K562 (cell line): ENCODE measurements at regions of chr6 and their contacts with region 1.

Region 1: DNA sequence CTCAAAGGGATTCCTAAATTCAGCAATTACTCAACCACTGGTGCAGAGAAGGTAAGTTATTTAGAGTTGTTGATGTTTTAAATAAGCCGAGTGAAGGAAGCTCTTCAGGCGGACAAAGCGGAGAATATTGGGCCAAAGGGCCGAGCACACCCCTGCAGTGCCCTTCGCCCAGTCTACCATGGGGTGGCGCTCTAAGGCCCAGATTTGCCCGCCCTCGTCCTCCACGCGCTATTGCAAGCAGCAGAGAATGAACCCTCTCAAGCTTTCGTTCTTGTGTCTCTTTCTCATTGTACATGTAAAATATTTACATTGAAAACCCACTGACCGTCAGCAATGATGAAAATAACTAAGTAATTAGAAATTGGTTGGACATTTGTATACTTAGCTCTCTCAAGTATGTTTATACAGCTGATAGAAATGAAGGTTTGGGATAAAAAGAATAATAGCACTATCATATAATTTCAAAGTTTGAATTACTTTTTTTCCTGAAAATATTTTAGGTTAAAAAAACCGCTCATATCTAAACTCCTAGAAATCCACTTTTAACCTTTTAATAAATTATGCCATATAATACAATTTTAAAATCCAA is 195.0 kb upstream of the CEP162 start:
- DNase-seq: peak; percentile 55 to 75 (median 62)
- ATAC-seq: peak; percentile 100
- H3K4me3 ChIP-seq: no peak overlapping the region
- H3K27ac ChIP-seq: no peak overlapping the region
- H3K4me1 ChIP-seq: no peaks in the 10 kb centered on the region
- H3K27me3 ChIP-seq: no peaks in the 10 kb centered on the region
- CTCF ChIP-seq: peak; percentile 89 to 96 (median 91)
- EP300 ChIP-seq: no peak
- POLR2A ChIP-seq: no peak
- RAD21 ChIP-seq: peak; percentile 94 to 95

Region 2: GRCh38 chr6:84284428-84285049 is 137.9 kb before region 1 on chr6:
- CTCF ChIA-PET with region 1: no interaction called
- POLR2A ChIA-PET with region 1: no interaction called
- in situ Hi-C with region 1: no loop called
- intact Hi-C with region 1: loop called (anchors 1 kb)
- DNase-seq: peak; percentile 18 to 50 (median 36)
- ATAC-seq: peak; percentile 91
- H3K4me3 ChIP-seq: no peak overlapping the region
- H3K27ac ChIP-seq: no peak overlapping the region
- H3K4me1 ChIP-seq: peaks cover 0 to 12% of the 10 kb centered on the region in 2 experiments; a peak in 2 of 5 replicates
- H3K27me3 ChIP-seq: no peaks in the 10 kb centered on the region
- CTCF ChIP-seq: peak; percentile 53 to 69 (median 68)
- EP300 ChIP-seq: no peak
- POLR2A ChIP-seq: no peak
- RAD21 ChIP-seq: peak; percentile 39 to 61

Region 3: GRCh38 chr6:84685983-84686584 is 263.6 kb after region 1 on chr6:
- CTCF ChIA-PET with region 1: no interaction called
- POLR2A ChIA-PET with region 1: no interaction called
- in situ Hi-C with region 1: no loop called
- intact Hi-C with region 1: loop called (anchors 2 kb)
- DNase-seq: peak; percentile 18 to 51 (median 21)
- ATAC-seq: peak; percentile 77
- H3K4me3 ChIP-seq: no peak overlapping the region
- H3K27ac ChIP-seq: no peak overlapping the region
- H3K4me1 ChIP-seq: no peaks in the 10 kb centered on the region
- H3K27me3 ChIP-seq: no peaks in the 10 kb centered on the region
- CTCF ChIP-seq: peak in 2 of 3 experiments; percentile 63 to 64; a peak in 5 of 6 replicates
- EP300 ChIP-seq: no peak
- POLR2A ChIP-seq: no peak
- RAD21 ChIP-seq: peak; percentile 44 to 71

Region 4: GRCh38 chr6:85015396-85015990 is 593.0 kb after region 1 on chr6:
- CTCF ChIA-PET with region 1: no interaction called
- POLR2A ChIA-PET with region 1: no interaction called
- in situ Hi-C with region 1: no loop called
- intact Hi-C with region 1: loop called (anchors 2 kb)
- DNase-seq: peak; percentile 45 to 75 (median 56)
- ATAC-seq: peak; percentile 100
- H3K4me3 ChIP-seq: no peak overlapping the region
- H3K27ac ChIP-seq: no peak overlapping the region
- H3K4me1 ChIP-seq: no peaks in the 10 kb centered on the region
- H3K27me3 ChIP-seq: no peaks in the 10 kb centered on the region
- CTCF ChIP-seq: peak; percentile 82 to 98 (median 87)
- EP300 ChIP-seq: no peak
- POLR2A ChIP-seq: no peak
- RAD21 ChIP-seq: peak; percentile 68 to 76